BJ (cell line): ENCODE measurements at regions of chr10 and their contacts with region 1.

Region 1: DNA sequence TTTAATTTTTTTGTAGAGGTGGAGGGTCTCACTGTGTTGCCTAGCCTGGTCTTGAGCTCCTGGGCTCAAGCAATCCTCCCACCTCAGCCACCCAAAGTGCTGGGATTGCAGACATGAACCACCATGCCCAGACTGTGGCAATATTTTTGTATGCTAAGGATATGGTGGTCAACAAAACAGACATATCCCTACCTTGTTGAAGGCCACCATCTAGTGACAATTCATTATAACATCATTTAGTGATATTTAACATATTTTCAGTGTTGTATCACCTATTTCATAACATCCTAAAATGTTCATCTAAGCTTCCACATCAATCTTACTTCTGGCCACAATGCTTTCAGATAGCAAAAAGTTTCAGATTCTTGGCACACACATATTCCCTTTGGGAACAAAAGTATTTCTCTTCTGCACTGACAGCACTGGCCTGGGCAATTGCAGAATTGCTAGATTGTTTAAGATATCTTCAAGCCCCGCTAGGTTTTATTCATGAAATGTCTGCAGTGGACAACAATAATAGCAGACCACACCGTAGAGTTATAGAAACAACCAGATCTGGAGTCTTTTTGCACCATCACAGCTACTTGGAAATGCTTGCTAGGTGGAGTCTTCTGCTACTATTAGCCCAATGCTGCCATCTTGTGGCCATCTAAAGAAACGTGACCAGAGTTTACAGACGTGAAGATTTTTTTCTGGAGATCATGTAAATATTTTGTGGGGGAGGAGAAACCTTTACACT is 58.4 kb downstream of the DNAJC12 start:
- DNase-seq: no peak
- H3K4me3 ChIP-seq: no peak overlapping the region
- H3K27me3 ChIP-seq: no peaks in the 10 kb centered on the region
- CTCF ChIP-seq: peak; percentile 76

Region 2: GRCh38 chr10:67666416-67667034 is 113.1 kb before region 1 on chr10:
- CTCF ChIA-PET with region 1: interaction called, 12 read pairs
- POLR2A ChIA-PET with region 1: no interaction called
- DNase-seq: no peak
- H3K4me3 ChIP-seq: no peak overlapping the region
- H3K27me3 ChIP-seq: no peaks in the 10 kb centered on the region
- CTCF ChIP-seq: peak; percentile 44

Region 3: DNA sequence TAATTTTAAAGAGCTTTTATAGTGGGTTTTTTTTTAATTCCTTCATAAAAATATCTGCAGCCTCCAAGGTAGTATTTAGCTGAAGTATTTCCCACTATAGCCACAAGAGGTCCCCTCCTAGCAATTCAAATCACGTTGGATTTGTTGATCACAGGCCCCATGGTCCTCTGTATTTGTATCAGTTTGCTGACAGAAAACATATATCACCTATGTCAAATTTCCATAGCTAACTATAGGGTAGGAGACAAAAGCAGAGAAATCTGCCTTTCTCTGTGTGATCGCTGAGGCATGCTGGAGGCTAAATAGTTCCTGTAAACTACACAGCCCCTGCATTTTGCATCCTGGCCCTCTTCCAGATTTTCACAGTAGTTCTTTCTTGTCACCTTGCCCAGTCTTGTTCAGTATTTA is 81.9 kb before region 1 on chr10:
- CTCF ChIA-PET with region 1: interaction called, 131 read pairs
- POLR2A ChIA-PET with region 1: no interaction called
- DNase-seq: no peak
- H3K4me3 ChIP-seq: no peak overlapping the region
- H3K27me3 ChIP-seq: no peaks in the 10 kb centered on the region; the same call in 1 of the 2 replicates
- CTCF ChIP-seq: peak; percentile 67

Region 4: DNA sequence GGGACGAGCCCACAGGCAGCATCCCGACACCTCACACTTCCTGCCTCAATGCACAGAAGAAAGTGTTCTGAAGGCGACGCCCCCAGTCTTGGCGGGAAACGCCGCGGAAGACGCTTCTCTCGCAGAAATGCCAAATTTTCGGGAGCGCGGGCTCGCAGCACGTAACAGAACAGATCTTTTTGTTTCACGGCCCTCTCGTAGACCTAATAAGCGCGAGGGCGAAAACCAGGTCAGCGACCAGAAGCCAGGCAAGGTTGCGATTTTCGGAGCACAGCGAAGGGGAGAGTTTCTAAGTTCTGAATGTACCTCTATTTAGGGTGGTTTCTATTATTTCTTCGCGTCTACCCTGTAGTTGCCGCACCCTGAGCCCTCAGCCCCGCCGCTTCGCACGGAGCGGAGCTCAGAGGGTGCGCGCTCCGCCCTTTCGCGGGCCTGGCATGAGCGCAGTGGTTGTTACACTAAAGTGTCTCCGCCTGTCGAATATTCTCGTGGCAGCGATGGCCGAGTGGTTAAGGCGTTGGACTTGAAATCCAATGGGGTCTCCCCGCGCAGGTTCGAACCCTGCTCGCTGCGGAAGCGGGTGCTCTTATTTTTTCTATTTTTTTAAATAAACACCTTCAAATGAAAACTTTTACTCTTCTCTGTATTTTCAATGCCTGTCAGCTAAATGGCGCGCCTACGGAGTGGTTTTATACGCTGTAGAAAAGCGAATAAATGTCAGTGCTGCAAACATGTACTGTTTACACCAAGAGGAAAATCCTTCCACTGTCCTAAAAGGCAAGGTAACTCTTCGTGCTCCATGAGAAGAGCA is 15.4 kb before region 1 on chr10:
- CTCF ChIA-PET with region 1: interaction called, 10 read pairs
- POLR2A ChIA-PET with region 1: no interaction called
- DNase-seq: peak; percentile 77
- H3K4me3 ChIP-seq: peak overlapping the region; percentile 57
- H3K27me3 ChIP-seq: no peaks in the 10 kb centered on the region; the same call in 1 of the 2 replicates
- CTCF ChIP-seq: no peak

Region 5: GRCh38 chr10:67837541-67838314 is 58.1 kb after region 1 on chr10 and contains the start of gene DNAJC12:
- CTCF ChIA-PET with region 1: no interaction called
- POLR2A ChIA-PET with region 1: no interaction called
- DNase-seq: no peak
- H3K4me3 ChIP-seq: no peak within 1 kb of the TSS
- H3K27me3 ChIP-seq: no peaks in the 10 kb centered on the region
- CTCF ChIP-seq: no peak
- polyA plus RNA-seq, gene DNAJC12: 0.13 and 0.42 TPM in 2 replicates